MCF 10A (cell line): ENCODE measurements at regions of chr5 and their contacts with region 1.

Region 1: DNA sequence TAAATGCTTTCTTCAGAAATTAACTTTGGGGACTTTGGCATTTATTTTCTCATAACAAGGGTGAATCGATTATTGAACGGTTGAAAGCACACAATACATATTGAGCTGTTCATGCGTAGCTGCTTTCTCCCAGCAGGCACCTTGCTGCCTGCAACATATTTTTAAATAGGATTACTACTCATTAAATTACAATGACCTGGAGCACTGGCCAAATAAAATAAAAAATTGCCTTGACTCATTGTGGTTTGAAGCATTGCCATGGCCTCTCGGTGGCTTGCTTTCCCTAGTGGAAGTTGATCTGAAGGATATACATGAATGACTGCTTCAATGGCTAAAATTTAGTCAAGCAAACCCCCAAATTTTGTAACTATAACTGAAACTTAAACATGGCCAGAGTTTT is 181.6 kb upstream of the NUDT12 start:
- DNase-seq: peak; percentile 81
- H3K4me3 Mint-ChIP-seq: no peak overlapping the region
- H3K27ac Mint-ChIP-seq: no peak overlapping the region
- H3K4me1 Mint-ChIP-seq: peaks cover 15% of the 10 kb centered on the region
- H3K27me3 Mint-ChIP-seq: peaks cover 34% of the 10 kb centered on the region
- CTCF ChIP-seq: no peak

Region 2: DNA sequence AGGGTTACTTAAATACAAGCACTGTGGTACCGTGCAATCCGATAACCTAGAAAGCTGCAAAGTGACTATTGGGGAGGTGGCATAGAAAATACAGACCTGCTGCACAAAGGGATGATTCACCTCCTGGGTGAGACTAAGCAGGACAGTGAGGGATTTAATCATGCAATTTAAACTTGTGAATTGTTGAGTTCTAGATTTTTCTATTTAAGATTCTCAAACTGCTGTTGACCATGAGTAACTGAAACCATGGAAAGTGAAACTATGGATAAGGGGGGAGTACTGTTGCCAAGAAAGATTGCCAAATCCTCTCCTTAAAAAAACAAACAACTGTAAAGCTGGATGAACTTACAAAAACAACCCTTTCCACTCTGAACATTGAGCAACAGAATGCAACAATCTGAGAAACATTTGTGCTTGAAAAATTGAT is 120.1 kb before region 1 on chr5:
- CTCF ChIA-PET with region 1: no interaction called
- POLR2A ChIA-PET with region 1: interaction called, 5 read pairs
- intact Hi-C with region 1: loop called (anchors 10 kb)
- DNase-seq: peak; percentile 90
- H3K4me3 Mint-ChIP-seq: peak overlapping the region; percentile 16
- H3K27ac Mint-ChIP-seq: peak overlapping the region; percentile 83
- H3K4me1 Mint-ChIP-seq: peaks cover 18% of the 10 kb centered on the region
- H3K27me3 Mint-ChIP-seq: no peaks in the 10 kb centered on the region
- CTCF ChIP-seq: no peak

Region 3: DNA sequence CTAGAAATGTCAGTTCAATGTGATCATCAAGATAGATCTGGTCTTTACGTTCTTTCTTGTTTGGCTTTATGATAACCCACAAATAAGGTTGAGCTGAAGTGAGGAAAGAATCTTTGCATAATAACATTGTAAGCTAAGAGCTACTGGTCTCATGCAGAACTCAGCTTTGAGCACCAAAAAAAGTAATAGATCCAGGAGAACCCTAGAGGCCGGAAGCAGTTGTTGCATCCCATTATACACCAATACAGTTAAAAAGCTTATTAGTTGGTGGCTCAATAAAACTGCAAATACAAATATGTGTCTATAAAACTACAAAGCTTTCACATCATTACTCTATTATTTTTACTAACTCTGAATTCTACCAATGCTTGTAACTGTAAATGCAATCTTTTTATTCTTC is 96.1 kb before region 1 on chr5:
- CTCF ChIA-PET with region 1: no interaction called
- POLR2A ChIA-PET with region 1: no interaction called
- intact Hi-C with region 1: no loop called
- DNase-seq: no peak
- H3K4me3 Mint-ChIP-seq: no peak overlapping the region
- H3K27ac Mint-ChIP-seq: no peak overlapping the region
- H3K4me1 Mint-ChIP-seq: no peaks in the 10 kb centered on the region
- H3K27me3 Mint-ChIP-seq: peaks cover 8% of the 10 kb centered on the region
- CTCF ChIP-seq: no peak